ENCODE measurements at regions of chr19 and their contacts with region 1.

Region 1: DNA sequence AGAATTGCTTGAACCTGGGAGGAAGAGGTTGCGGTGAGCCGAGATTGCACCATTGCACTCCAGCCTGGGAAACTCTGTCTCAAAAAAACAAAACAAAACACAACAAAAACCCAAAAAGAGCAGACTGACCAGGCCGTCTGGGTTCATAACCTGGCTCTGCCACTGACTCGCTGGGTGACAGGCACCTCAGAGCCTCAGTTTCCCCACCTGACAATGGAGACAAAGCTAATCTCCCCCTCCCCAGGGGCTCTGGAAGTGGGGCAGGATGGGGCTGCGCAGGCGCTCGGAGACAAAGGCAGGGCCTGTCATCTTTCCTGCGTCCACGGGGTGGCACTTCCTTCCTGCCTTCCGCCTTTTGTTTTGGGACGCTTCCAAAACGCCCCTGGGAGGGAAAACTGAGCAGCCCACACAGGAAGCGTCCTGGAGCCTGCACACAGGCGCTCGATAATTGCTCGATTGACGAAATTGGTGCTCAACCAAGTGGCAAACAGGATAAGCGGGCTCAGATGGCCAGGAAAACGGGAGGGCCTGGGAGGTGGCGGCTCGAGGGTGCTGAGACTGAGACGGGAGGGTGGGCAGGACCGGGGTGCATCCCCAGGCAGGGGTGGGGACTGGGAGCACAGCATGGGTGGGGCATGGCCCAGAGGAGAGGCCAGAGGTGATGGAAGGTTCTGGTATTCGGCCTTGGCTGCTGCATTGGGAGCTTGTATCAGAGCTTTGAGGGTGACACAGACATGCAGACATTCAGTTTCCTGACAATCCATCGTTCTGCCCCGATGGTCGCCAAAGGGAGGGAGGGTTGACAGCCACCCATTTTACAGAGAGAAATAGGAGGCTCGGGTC is 17.8 kb downstream of the SPC24 start:
- DNase-seq: peak; percentile 87 to 93
- H3K4me3 ChIP-seq: peak overlapping the region; percentile 21 to 45
- H3K27ac ChIP-seq: peak overlapping the region; percentile 91 to 92
- H3K4me1 ChIP-seq: peaks cover 19 to 51% (median 42%) of the 10 kb centered on the region in 4 donors
- H3K27me3 ChIP-seq: no peaks in the 10 kb centered on the region
- CTCF ChIP-seq: peak; percentile 86 to 94

Region 2: GRCh38 chr19:11164879-11165406 is 27.2 kb after region 1 on chr19:
- intact Hi-C with region 1: loop called (anchors 2 kb)
- DNase-seq: peak; percentile 90 to 96
- H3K4me3 ChIP-seq: peak overlapping the region in 1 of 2 donors; percentile 33
- H3K27ac ChIP-seq: peak overlapping the region; percentile 87 to 88
- H3K4me1 ChIP-seq: peaks cover 12 to 77% (median 59%) of the 10 kb centered on the region in 4 donors
- H3K27me3 ChIP-seq: no peaks in the 10 kb centered on the region
- CTCF ChIP-seq: no peak

Region 3: DNA sequence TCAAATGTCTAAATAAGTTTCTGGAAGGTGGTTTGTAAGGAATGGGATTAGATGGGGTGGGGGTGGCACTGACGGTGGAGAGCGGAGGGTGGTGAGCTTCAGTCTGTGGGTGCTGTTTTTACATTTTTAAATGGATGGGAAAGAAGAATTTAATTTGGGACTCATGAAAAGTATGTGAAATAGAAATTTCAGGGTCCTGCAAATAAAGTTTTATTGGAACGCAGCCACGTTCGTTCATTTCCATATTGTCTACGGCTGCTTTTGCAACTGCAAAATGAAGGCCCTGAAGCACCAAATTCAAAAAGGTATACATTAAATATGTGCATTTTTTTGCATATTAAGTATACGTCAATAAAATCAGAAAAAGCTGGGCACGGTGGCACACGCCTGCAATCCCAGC is 49.7 kb after region 1 on chr19:
- intact Hi-C with region 1: no loop called
- DNase-seq: no peak
- H3K4me3 ChIP-seq: no peak overlapping the region
- H3K27ac ChIP-seq: peak overlapping the region; percentile 94 to 98
- H3K4me1 ChIP-seq: peaks cover 0 to 100% (median 78%) of the 10 kb centered on the region in 4 donors
- H3K27me3 ChIP-seq: no peaks in the 10 kb centered on the region
- CTCF ChIP-seq: no peak

Region 4: GRCh38 chr19:11197264-11198174 is 59.8 kb after region 1 on chr19 and contains the start of gene KANK2:
- intact Hi-C with region 1: loop called (anchors 2 kb)
- DNase-seq: peak; percentile 73 to 92
- H3K4me3 ChIP-seq: peak within 1 kb of the TSS; percentile 93 to 98
- H3K27ac ChIP-seq: peak within 1 kb of the TSS; percentile 94 to 98
- H3K4me1 ChIP-seq: peaks cover 0 to 71% (median 51%) of the 10 kb centered on the region in 4 donors
- H3K27me3 ChIP-seq: no peaks in the 10 kb centered on the region
- CTCF ChIP-seq: peak in 1 of 2 experiments; percentile 9

Region 5: DNA sequence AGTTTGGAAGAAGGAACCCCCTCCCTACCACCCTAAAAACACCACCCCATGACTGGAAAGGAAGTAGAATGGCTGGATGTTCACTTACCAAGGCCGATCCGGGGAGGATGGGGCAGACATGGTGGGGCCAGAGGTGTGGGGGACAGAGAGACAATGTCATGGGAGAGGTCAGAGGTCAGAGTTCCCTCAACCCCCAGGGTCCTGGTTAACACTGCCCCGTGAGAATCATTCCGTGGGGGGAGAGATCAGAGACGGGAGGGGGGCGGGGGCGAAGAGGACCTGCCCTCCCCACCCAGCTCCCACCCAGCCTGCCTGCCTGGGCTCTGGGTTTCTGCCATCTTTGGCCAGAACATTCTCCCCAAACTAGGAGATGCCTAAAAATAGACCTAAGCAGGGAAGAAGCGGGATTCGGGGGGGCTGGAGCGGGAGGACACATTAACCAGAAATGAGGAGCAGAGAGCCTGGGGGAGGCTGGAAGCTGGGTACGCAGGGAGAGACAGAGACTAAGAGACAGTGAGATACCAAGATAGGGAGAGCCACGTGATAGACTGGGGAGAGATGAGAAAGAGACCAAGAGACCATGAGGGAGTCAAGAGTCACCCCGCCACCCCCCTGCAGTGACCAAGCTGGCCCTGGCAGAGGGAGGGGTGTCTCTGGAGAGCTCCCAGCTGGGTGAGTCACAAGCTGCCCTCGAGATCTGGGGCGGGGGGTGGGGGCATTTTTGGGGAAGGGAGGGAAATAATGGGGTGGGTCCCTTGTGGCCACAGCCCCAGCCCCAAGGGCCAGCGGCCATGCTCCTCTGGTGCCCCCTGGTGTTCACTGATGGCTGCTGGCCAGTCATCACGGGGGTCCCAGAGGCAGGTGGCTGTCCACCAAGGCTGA is 65.7 kb after region 1 on chr19:
- intact Hi-C with region 1: loop called (anchors 2 kb)
- DNase-seq: peak; percentile 87 to 96
- H3K4me3 ChIP-seq: peak overlapping the region; percentile 18 to 30
- H3K27ac ChIP-seq: peak overlapping the region; percentile 94 to 98
- H3K4me1 ChIP-seq: peaks cover 0 to 56% (median 39%) of the 10 kb centered on the region in 4 donors
- H3K27me3 ChIP-seq: no peaks in the 10 kb centered on the region
- CTCF ChIP-seq: peak; percentile 89 to 97